Activated CD4-positive, alpha-beta memory T cell treated with anti-CD3 and anti-CD28 coated beads, Interleukin-2, amount 10 ng/mL, durations not matched to agents 7 days and 5 days (primary cell): ENCODE measurements at regions of chr3 and their contacts with region 1.

Region 1: GRCh38 chr3:139329345-139329850 is 14.4 kb upstream of the MRPS22 start:
- DNase-seq: peak; percentile 91
- H3K4me3 Mint-ChIP-seq: peak overlapping the region; percentile 52
- H3K27ac Mint-ChIP-seq: no peak overlapping the region
- H3K4me1 Mint-ChIP-seq: peaks cover 18% of the 10 kb centered on the region
- H3K27me3 Mint-ChIP-seq: peaks cover 29% of the 10 kb centered on the region

Region 2: GRCh38 chr3:138935848-138936740 is 393.3 kb before region 1 on chr3:
- CTCF ChIA-PET with region 1: interaction called, 16 read pairs
- POLR2A ChIA-PET with region 1: no interaction called
- DNase-seq: peak; percentile 67
- H3K4me3 Mint-ChIP-seq: peak overlapping the region; percentile 46
- H3K27ac Mint-ChIP-seq: peak overlapping the region; percentile 35
- H3K4me1 Mint-ChIP-seq: peaks cover 26% of the 10 kb centered on the region
- H3K27me3 Mint-ChIP-seq: peaks cover 77% of the 10 kb centered on the region

Region 3: DNA sequence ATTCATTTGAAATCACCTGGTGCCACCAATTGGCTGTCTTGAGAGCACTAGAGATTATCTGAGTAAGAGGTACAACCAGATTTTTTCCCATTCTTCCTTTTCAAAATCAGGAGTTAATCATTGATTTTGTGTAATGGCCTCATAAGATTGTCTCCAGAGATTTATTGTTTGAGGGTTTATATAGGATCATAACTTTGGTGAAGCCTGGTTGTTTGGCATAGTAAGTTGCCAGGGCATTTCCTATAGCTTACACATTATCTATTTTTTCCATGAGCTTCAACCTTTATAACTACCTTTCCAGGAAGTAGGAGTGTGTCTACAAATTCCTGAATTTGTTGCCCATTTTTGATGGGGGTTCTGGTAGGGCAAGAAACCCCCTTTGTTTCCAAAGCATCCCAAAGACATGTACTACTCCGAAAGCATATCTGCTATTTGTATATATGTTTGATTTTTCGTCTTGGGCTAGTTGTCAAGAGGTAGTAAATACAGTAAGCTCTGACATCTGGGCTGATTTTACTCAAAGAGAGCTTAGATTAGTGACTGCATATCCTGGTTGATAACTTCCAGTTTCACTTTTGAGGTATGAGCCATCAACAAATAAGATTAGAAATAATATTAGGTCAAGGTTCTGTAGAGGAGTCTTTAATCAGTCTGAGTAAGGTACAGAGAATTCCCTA is 296.9 kb before region 1 on chr3:
- CTCF ChIA-PET with region 1: no interaction called
- POLR2A ChIA-PET with region 1: no interaction called
- DNase-seq: no peak
- H3K4me3 Mint-ChIP-seq: no peak overlapping the region
- H3K27ac Mint-ChIP-seq: no peak overlapping the region
- H3K4me1 Mint-ChIP-seq: no peaks in the 10 kb centered on the region
- H3K27me3 Mint-ChIP-seq: no peaks in the 10 kb centered on the region

Region 4: GRCh38 chr3:139111392-139112229 is 217.8 kb before region 1 on chr3:
- CTCF ChIA-PET with region 1: interaction called, 74 read pairs
- POLR2A ChIA-PET with region 1: interaction called, 10 read pairs
- DNase-seq: peak; percentile 66
- H3K4me3 Mint-ChIP-seq: no peak overlapping the region
- H3K27ac Mint-ChIP-seq: no peak overlapping the region
- H3K4me1 Mint-ChIP-seq: peaks cover 4% of the 10 kb centered on the region
- H3K27me3 Mint-ChIP-seq: no peaks in the 10 kb centered on the region

Region 5: GRCh38 chr3:139343895-139344856 is 14.8 kb after region 1 on chr3 and contains the start of gene MRPS22:
- CTCF ChIA-PET with region 1: interaction called, 21 read pairs
- POLR2A ChIA-PET with region 1: interaction called, 3 read pairs
- DNase-seq: peak; percentile 87
- H3K4me3 Mint-ChIP-seq: peak within 1 kb of the TSS; percentile 48
- H3K27ac Mint-ChIP-seq: no peak within 1 kb of the TSS
- H3K4me1 Mint-ChIP-seq: peaks cover 14% of the 10 kb centered on the region
- H3K27me3 Mint-ChIP-seq: peaks cover 3% of the 10 kb centered on the region
- total RNA-seq, gene MRPS22: 31.9 to 37.2 TPM